ENCODE measurements at regions of chr1 and their contacts with region 1.

Region 1: DNA sequence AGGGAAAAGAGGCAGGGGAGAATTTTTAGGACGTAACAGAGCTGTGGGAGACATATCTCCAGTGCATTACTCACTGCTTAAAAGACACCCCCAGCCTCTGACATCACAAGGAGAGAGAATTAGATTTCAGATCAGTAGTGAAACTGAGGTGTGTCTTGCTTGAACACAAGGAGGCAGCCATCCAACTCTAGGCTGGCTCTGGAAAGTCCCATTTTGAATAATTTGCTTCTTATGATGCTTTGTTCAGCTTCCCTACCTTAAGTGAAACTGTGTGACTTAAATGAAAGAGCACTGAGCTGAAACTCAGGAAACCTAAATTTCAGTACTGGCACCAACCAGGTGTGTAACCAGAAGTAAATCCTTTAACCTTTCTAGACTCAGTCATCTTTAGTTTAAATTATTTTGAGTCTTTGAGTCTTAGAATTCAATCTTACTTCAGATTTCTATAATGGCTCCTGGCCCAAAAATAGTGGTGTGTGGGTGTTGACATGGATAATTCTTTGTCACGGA is 251.6 kb upstream of the SGIP1 start:
- DNase-seq: peak; percentile 71 to 89 (median 79)
- H3K4me3 ChIP-seq: no peak overlapping the region
- H3K4me3 Mint-ChIP-seq: peak overlapping the region in 4 of 8 donors; percentile 12 to 67 (median 42)
- H3K27ac ChIP-seq: peak overlapping the region; percentile 57
- H3K27ac Mint-ChIP-seq: peak overlapping the region; percentile 93 to 97 (median 95)
- H3K4me1 ChIP-seq: peaks cover 90% of the 10 kb centered on the region
- H3K4me1 Mint-ChIP-seq: peaks cover 70 to 93% (median 83%) of the 10 kb centered on the region in 4 donors
- H3K27me3 ChIP-seq: no peaks in the 10 kb centered on the region
- H3K27me3 Mint-ChIP-seq: peaks cover 0 to 3% of the 10 kb centered on the region in 2 donors

Region 2: GRCh38 chr1:66253330-66253921 is 29.0 kb before region 1 on chr1:
- CTCF ChIA-PET with region 1: interaction called, 7 read pairs
- POLR2A ChIA-PET with region 1: interaction called, 3 read pairs
- intact Hi-C with region 1: loop called (anchors 1 kb)
- DNase-seq: peak in 4 of 5 donors; percentile 45 to 55 (median 50)
- H3K4me3 ChIP-seq: no peak overlapping the region
- H3K4me3 Mint-ChIP-seq: no peak overlapping the region
- H3K27ac ChIP-seq: no peak overlapping the region
- H3K27ac Mint-ChIP-seq: peak overlapping the region in 1 of 7 donors; percentile 57
- H3K4me1 ChIP-seq: peaks cover 26% of the 10 kb centered on the region
- H3K4me1 Mint-ChIP-seq: peaks cover 5 to 24% (median 16%) of the 10 kb centered on the region in 4 donors
- H3K27me3 ChIP-seq: no peaks in the 10 kb centered on the region
- H3K27me3 Mint-ChIP-seq: peaks cover 0 to 2% of the 10 kb centered on the region in 2 donors

Region 3: GRCh38 chr1:66339944-66340343 is 57.5 kb after region 1 on chr1:
- CTCF ChIA-PET with region 1: interaction called, 21 read pairs
- POLR2A ChIA-PET with region 1: interaction called, 9 read pairs
- intact Hi-C with region 1: no loop called
- DNase-seq: no peak
- H3K4me3 ChIP-seq: peak overlapping the region in 1 of 2 donors; percentile 11
- H3K4me3 Mint-ChIP-seq: peak overlapping the region; percentile 52 to 84 (median 67)
- H3K27ac ChIP-seq: peak overlapping the region; percentile 49
- H3K27ac Mint-ChIP-seq: peak overlapping the region; percentile 61 to 94 (median 80)
- H3K4me1 ChIP-seq: peaks cover 88% of the 10 kb centered on the region
- H3K4me1 Mint-ChIP-seq: peaks cover 46 to 86% (median 68%) of the 10 kb centered on the region in 4 donors
- H3K27me3 ChIP-seq: no peaks in the 10 kb centered on the region
- H3K27me3 Mint-ChIP-seq: no peaks in the 10 kb centered on the region

Region 4: GRCh38 chr1:66357478-66358197 is 75.2 kb after region 1 on chr1:
- CTCF ChIA-PET with region 1: interaction called, 17 read pairs
- POLR2A ChIA-PET with region 1: interaction called, 12 read pairs
- intact Hi-C with region 1: no loop called
- DNase-seq: peak; percentile 66 to 74 (median 67)
- H3K4me3 ChIP-seq: peak overlapping the region in 1 of 2 donors; percentile 1
- H3K4me3 Mint-ChIP-seq: peak overlapping the region; percentile 43 to 85 (median 62)
- H3K27ac ChIP-seq: peak overlapping the region; percentile 15
- H3K27ac Mint-ChIP-seq: peak overlapping the region; percentile 34 to 88 (median 74)
- H3K4me1 ChIP-seq: peaks cover 96% of the 10 kb centered on the region
- H3K4me1 Mint-ChIP-seq: peaks cover 70 to 97% (median 83%) of the 10 kb centered on the region in 4 donors
- H3K27me3 ChIP-seq: no peaks in the 10 kb centered on the region
- H3K27me3 Mint-ChIP-seq: no peaks in the 10 kb centered on the region

Region 5: DNA sequence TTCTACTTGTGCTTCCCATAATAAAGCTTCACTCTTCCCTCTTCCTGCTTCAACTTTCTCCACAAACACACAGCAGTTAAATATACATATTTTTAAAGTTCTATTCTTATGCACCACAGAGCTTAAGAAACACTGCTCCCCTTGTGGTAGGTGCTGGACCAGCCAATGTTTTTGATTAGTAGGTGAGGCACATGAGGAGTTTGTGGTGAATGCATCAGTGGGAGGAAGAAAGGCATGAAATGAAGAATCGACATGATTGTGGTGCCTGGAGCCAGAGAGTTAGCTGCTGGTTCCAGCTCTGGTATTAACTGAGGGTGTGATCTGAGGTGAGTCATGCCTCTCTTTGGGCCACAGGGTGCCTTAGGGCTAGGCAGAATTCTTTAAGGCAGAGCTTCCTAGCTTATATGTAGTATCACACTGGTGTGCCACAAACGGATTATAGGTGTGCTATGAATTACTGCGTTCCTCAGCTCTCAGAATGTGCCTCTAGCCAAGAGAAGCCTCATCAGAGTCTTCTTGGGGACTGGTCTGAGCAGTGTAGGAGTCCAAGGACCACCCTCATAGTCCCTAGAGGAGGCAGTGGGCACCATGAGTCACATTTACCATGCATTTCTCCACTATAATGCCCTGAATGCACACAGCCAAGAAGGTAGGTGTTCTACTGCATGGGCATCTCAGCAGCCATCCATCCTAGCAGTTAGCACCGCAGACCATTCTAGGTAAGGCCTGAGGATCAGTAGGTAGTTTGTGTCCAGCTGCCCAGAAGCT is 154.2 kb after region 1 on chr1:
- CTCF ChIA-PET with region 1: interaction called, 56 read pairs
- POLR2A ChIA-PET with region 1: interaction called, 3 read pairs
- intact Hi-C with region 1: no loop called
- DNase-seq: peak; percentile 42 to 56 (median 48)
- H3K4me3 ChIP-seq: no peak overlapping the region
- H3K4me3 Mint-ChIP-seq: peak overlapping the region in 4 of 8 donors; percentile 4 to 61 (median 31)
- H3K27ac ChIP-seq: no peak overlapping the region
- H3K27ac Mint-ChIP-seq: peak overlapping the region in 6 of 7 donors; percentile 0 to 92 (median 52)
- H3K4me1 ChIP-seq: peaks cover 21% of the 10 kb centered on the region
- H3K4me1 Mint-ChIP-seq: peaks cover 8 to 27% (median 19%) of the 10 kb centered on the region in 4 donors
- H3K27me3 ChIP-seq: no peaks in the 10 kb centered on the region
- H3K27me3 Mint-ChIP-seq: no peaks in the 10 kb centered on the region

Measured in CD4-positive, alpha-beta memory T cell (primary cell).